ENCODE measurements at regions of chr3 and their contacts with region 1.

Region 1: DNA sequence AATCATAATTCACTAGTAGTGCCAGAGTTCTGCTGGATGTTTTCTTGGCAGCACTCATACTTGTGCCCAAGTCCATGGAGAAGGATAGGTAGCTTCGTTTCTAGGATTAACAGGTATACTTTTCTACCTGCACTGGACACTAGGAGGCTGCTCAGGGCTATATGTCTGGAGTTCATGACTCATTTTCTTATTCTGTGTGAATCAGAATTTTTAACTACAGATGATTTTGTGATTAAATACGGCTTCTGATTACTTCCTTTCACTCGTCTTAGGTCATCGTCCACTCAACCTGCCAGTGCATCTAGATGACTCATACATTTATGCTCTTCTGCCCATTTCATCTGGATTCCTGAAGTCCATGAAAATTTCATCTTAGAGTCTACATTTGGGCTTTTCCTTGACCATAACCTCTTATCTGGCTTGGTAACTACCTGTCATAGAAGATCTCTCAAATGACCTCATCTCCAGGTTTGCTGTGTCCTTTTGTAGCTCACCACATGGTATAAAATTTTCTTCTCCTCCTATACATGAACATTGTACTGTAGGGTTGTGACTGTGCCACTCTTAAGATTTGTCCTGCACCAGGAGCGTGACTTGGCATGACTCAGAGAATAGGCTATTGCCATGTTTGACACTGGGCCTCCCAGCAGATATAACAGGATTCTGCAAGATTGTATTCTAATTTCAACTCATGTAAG is 66.7 kb upstream of the GCSAM start:
- DNase-seq: no peak
- ATAC-seq: no peak
- H3K4me3 ChIP-seq: no peak overlapping the region
- H3K4me3 Mint-ChIP-seq: no peak overlapping the region
- H3K27ac ChIP-seq: no peak overlapping the region
- H3K27ac Mint-ChIP-seq: no peak overlapping the region
- H3K4me1 ChIP-seq: no peaks in the 10 kb centered on the region
- H3K4me1 Mint-ChIP-seq: no peaks in the 10 kb centered on the region
- H3K27me3 ChIP-seq: no peaks in the 10 kb centered on the region
- H3K27me3 Mint-ChIP-seq: peaks cover 0 to 15% (median 4%) of the 10 kb centered on the region in 5 donors

Region 2: DNA sequence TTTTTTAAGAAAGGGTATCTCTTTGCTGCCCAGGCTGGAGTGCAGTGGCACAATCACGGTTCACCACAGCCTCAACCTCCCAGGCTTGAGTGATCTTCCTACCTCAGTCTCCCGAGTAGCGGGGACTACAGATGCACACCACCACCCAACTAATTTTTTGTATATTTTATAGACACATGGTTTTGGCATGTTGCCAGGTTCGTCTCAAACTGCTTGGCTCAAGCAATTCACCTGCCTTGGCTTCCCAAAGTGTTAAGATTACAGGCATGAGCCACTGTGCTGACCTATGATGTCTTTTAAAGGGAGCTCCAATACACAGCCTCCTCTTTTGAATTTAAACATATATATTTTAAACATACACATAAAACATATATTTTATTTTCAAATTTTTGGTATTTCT is 33.3 kb after region 1 on chr3:
- CTCF ChIA-PET with region 1: no interaction called
- POLR2A ChIA-PET with region 1: no interaction called
- intact Hi-C with region 1: loop called in 1 of 2 experiments (anchors 5 kb)
- DNase-seq: no peak
- ATAC-seq: no peak
- H3K4me3 ChIP-seq: no peak overlapping the region
- H3K4me3 Mint-ChIP-seq: no peak overlapping the region
- H3K27ac ChIP-seq: no peak overlapping the region
- H3K27ac Mint-ChIP-seq: no peak overlapping the region
- H3K4me1 ChIP-seq: no peaks in the 10 kb centered on the region
- H3K4me1 Mint-ChIP-seq: no peaks in the 10 kb centered on the region
- H3K27me3 ChIP-seq: no peaks in the 10 kb centered on the region
- H3K27me3 Mint-ChIP-seq: peaks cover 0 to 12% (median 0%) of the 10 kb centered on the region in 5 donors

Region 3: GRCh38 chr3:112261742-112262141 is 62.0 kb after region 1 on chr3:
- CTCF ChIA-PET with region 1: no interaction called
- POLR2A ChIA-PET with region 1: no interaction called
- intact Hi-C with region 1: no loop called
- DNase-seq: no peak
- ATAC-seq: peak; percentile 44
- H3K4me3 ChIP-seq: no peak overlapping the region
- H3K4me3 Mint-ChIP-seq: no peak overlapping the region
- H3K27ac ChIP-seq: no peak overlapping the region
- H3K27ac Mint-ChIP-seq: no peak overlapping the region
- H3K4me1 ChIP-seq: no peaks in the 10 kb centered on the region
- H3K4me1 Mint-ChIP-seq: no peaks in the 10 kb centered on the region
- H3K27me3 ChIP-seq: no peaks in the 10 kb centered on the region
- H3K27me3 Mint-ChIP-seq: peaks cover 0 to 8% (median 0%) of the 10 kb centered on the region in 5 donors

Region 4: GRCh38 chr3:112390783-112391641 is 191.2 kb after region 1 on chr3:
- CTCF ChIA-PET with region 1: no interaction called
- POLR2A ChIA-PET with region 1: no interaction called
- intact Hi-C with region 1: no loop called
- DNase-seq: peak in 5 of 9 donors; percentile 7 to 34 (median 25)
- ATAC-seq: peak; percentile 60
- H3K4me3 ChIP-seq: no peak overlapping the region
- H3K4me3 Mint-ChIP-seq: peak overlapping the region in 6 of 10 donors; percentile 9 to 59 (median 34)
- H3K27ac ChIP-seq: no peak overlapping the region
- H3K27ac Mint-ChIP-seq: peak overlapping the region; percentile 60 to 91 (median 77)
- H3K4me1 ChIP-seq: peaks cover 0 to 9% of the 10 kb centered on the region in 2 donors
- H3K4me1 Mint-ChIP-seq: peaks cover 27 to 50% (median 42%) of the 10 kb centered on the region in 7 donors
- H3K27me3 ChIP-seq: no peaks in the 10 kb centered on the region
- H3K27me3 Mint-ChIP-seq: no peaks in the 10 kb centered on the region